ENCODE measurements at regions of chr1 and their contacts with region 1.

Region 1: DNA sequence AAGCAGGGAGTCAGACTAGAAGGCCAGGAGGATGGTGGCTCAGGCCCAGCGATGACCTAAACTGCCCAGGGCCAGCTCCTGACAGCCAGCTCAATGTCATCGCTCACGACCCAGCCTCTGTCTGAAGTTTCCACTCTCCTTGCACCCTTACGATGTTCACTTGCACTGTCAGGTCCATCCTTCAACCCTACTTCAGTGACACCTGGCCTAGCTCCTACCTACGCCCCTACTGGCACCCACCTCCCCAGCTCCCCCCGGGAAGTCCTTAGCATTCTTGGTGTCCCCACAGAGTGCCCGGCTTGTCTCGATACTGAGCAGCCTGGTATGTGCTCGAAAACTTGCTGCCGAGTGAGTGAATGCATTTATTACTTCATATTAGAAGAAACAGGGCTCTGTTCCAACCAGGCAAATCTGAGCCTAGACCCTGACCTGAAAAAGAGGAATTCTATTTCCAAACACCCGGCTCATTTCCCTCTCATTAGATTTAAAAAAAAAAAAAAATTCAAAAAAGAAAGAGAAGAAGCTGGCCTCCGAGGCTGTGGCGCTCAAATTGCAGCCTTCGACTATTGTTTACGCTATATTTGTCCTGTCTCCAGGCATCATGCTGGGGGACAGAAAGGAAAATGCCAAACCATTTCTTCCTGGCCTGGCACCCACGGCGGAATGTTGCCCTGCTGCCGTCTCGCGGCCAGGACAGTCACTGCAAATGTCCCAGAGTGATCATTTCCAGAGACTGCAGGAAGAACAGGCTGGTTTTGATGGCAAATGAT is 29.8 kb upstream of the LRRC38 start:
- DNase-seq: no peak
- ATAC-seq: peak; percentile 75

Region 2: DNA sequence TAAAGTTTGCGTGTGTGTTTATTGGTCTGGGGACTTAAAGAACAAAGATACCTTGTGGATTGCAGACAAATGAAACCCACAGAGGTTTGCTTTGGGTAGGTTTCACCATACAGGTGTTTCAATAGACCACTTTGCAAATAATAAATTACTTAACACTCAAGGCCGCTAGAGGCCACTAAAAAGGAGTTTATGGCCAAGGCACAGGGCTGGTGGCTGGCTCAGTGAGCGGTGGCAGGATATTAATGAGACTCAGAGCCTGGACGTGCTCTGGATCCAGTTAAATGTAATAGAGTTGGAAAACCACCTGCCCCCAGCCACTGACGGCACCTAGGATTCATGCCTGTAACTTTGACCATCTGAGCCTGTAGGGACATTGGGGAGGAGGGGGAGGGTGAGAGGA is 74.3 kb before region 1 on chr1:
- intact Hi-C with region 1: loop called (anchors 1 kb)
- DNase-seq: no peak
- ATAC-seq: peak; percentile 63

Region 3: GRCh38 chr1:13487143-13487868 is 56.3 kb before region 1 on chr1:
- intact Hi-C with region 1: loop called (anchors 2 kb)
- DNase-seq: peak; percentile 78
- ATAC-seq: peak; percentile 83

Region 4: GRCh38 chr1:13498553-13498952 is 45.1 kb before region 1 on chr1:
- intact Hi-C with region 1: no loop called
- DNase-seq: no peak
- ATAC-seq: no peak

Region 5: GRCh38 chr1:13583966-13584791 is 40.5 kb after region 1 on chr1:
- intact Hi-C with region 1: loop called (anchors 5 kb)
- DNase-seq: no peak
- ATAC-seq: peak; percentile 76

Region 6: GRCh38 chr1:13600762-13601453 is 57.3 kb after region 1 on chr1:
- intact Hi-C with region 1: loop called (anchors 2 kb)
- DNase-seq: no peak
- ATAC-seq: peak; percentile 94